Right lobe of liver (tissue), 6 donors: ENCODE measurements at regions of chr11 and their contacts with region 1.

Region 1: DNA sequence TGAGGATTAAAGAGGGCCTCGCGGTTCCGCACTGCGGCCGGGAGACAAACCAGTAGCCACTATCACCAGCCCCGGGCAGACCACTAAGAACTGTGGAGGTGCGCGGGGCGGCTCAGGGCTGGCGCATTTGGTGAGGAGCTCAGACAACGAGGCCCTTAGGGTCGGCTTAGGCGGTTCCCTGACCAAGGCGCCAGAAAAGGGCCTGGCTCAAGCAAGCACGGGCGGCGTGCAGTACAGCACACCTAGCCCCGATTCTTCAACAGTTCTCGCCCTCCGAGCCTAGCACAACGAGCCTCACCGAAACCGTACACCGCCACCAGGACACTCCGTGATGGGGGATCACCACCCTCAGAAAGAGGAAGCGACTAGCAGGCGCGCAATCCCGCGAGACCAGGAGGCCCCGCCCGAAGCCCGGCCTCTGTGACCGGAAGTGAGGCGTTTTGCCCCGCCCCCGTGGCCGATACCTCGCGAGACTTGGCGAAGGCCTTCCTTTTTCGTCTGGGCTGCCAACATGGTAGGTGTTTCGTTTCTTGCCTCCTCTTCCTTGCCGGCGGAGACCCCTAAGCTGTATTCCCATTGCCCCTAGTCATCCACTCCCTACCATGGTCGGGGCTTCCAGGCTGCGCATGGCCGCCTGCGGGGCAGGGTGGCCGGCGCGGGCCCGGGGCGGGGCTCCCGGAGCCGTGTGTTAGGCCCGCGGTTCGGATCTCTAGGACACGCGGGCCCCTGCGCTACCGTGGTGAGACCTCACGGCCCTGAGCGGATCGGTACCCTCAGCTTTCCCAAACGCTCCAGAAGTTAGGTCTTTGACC is at the starts of genes RPL27A and TRIM66:
- DNase-seq: peak; percentile 99
- ATAC-seq: peak; percentile 97 to 99 (median 98)
- H3K4me3 ChIP-seq: peak within 1 kb of the TSS; percentile 93 to 96 (median 93)
- H3K27ac ChIP-seq: peak within 1 kb of the TSS; percentile 85 to 96 (median 92)
- H3K4me1 ChIP-seq: peaks cover 0 to 23% (median 11%) of the 10 kb centered on the region in 4 donors
- H3K27me3 ChIP-seq: no peaks in the 10 kb centered on the region
- CTCF ChIP-seq: peak in 1 of 4 donors; percentile 22
- POLR2A ChIP-seq: peak; percentile 96
- total RNA-seq, gene RPL27A: 187 to 394 (median 327) TPM
- total RNA-seq, gene TRIM66: 4.0 to 16.4 (median 6.9) TPM

Region 2: DNA sequence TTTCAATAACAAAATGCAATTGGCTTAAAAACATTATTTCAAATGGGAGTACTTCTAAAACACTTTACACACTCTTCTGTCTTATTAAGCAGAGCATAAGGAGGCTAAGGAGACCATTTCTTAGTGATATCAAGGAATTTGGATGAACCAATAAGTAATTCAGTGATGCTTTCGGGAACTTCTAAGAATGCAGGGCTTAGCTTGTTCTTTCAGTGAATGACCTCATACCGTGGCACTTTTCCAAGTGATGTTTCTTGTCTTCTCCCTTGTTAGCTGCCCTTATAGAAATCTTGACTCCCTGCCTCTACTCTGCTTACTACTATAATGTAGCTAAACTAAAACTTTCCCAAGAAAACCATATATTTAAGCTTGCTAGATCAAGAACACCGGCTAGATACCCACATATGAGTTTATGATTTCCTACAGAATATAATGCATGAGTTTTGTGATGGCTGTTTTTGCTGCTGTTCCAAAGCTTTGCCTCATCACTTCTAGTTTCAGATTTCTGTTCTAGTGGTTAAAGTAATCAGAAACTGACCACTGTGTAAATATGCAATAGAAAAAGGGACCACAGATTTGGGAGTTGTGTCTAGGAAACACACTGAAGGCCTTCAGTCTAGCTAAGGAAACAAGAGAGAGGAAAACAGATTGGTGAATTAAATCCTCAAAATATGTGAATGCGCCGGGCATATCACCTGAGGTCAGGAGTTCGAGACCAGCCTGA is 51.0 kb before region 1 on chr11:
- intact Hi-C with region 1: no loop called
- DNase-seq: no peak
- ATAC-seq: no peak
- H3K4me3 ChIP-seq: no peak overlapping the region
- H3K27ac ChIP-seq: no peak overlapping the region
- H3K4me1 ChIP-seq: peaks cover 0 to 7% (median 0%) of the 10 kb centered on the region in 4 donors
- H3K27me3 ChIP-seq: no peaks in the 10 kb centered on the region
- CTCF ChIP-seq: no peak
- POLR2A ChIP-seq: no peak

Region 3: DNA sequence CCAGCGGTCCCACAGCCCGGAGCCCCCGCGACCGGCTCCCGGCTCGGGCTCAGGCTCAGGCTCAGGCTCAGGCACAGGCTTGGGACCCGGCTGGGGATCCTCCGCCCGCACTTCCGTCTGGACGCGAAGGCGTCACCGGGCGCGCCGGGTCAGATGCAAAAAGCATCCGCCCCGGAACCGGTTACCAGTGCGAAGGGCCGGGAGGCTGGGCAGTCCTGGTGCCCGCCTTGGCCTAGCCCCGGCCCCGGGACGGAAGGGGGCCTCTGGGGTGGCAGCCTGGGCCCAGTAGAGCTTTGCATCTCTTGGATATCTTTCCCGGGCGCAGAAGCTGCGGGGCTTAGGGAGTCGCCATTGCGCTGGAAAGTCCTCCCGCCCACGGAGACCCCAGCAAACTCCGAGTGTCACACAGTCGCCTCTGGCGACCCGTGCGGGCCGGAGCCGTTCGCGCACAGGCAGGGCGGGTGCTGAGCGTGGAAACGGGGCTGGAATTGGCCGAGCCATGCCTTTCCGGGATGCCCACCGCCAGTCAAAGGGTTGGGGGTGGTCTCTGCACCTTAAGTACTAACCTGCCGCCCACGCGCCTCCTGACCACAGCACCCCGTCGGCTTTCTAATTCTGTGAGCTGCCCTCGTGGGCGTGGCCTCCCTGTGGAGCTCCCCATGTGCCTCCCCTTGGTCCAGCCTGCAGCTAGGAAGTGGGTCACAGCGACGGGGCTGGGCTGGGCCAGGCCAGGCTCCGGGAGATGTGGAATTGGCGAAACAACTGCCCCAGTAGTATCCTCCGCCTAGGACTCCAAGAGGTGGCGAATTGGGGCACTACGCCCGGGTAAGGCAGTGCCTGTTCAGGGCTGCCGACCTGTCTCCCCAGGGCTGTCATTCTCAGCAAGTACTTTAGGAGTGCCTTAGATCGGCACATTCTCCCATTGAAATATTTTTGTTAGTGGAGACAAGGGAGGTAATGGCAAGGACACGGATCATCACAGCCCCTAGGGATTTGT is 282.1 kb after region 1 on chr11 and contains the start of gene TMEM9B:
- intact Hi-C with region 1: loop called in 1 of 2 experiments (anchors 5 kb)
- DNase-seq: peak; percentile 94 to 96 (median 95)
- ATAC-seq: peak; percentile 90 to 95 (median 94)
- H3K4me3 ChIP-seq: peak within 1 kb of the TSS; percentile 84 to 97 (median 87)
- H3K27ac ChIP-seq: peak within 1 kb of the TSS; percentile 80 to 92 (median 88)
- H3K4me1 ChIP-seq: peaks cover 0 to 20% (median 10%) of the 10 kb centered on the region in 4 donors
- H3K27me3 ChIP-seq: no peaks in the 10 kb centered on the region
- CTCF ChIP-seq: no peak
- POLR2A ChIP-seq: peak; percentile 94
- total RNA-seq, gene TMEM9B: 15.5 to 33.6 (median 19.8) TPM